Mucosa of descending colon (tissue), 3 donors: ENCODE measurements at regions of chr6 and their contacts with region 1.

Region 1: GRCh38 chr6:149431905-149432775 is 32.1 kb downstream of the SUMO4 start:
- DNase-seq: peak; percentile 87 to 97 (median 91)
- ATAC-seq: peak; percentile 97
- H3K4me3 ChIP-seq: no peak overlapping the region
- H3K4me1 ChIP-seq: no peaks in the 10 kb centered on the region
- CTCF ChIP-seq: peak; percentile 76

Region 2: GRCh38 chr6:149028767-149029405 is 403.3 kb before region 1 on chr6:
- intact Hi-C with region 1: loop called (anchors 2 to 5 kb)
- DNase-seq: peak in 1 of 3 donors; percentile 85
- ATAC-seq: peak; percentile 83
- H3K4me3 ChIP-seq: no peak overlapping the region
- H3K4me1 ChIP-seq: no peaks in the 10 kb centered on the region
- CTCF ChIP-seq: peak; percentile 30

Region 3: GRCh38 chr6:149082286-149082707 is 349.8 kb before region 1 on chr6:
- intact Hi-C with region 1: loop called (anchors 2 to 5 kb)
- DNase-seq: peak; percentile 62 to 96 (median 78)
- ATAC-seq: peak; percentile 90
- H3K4me3 ChIP-seq: no peak overlapping the region
- H3K4me1 ChIP-seq: no peaks in the 10 kb centered on the region
- CTCF ChIP-seq: peak; percentile 55

Region 4: DNA sequence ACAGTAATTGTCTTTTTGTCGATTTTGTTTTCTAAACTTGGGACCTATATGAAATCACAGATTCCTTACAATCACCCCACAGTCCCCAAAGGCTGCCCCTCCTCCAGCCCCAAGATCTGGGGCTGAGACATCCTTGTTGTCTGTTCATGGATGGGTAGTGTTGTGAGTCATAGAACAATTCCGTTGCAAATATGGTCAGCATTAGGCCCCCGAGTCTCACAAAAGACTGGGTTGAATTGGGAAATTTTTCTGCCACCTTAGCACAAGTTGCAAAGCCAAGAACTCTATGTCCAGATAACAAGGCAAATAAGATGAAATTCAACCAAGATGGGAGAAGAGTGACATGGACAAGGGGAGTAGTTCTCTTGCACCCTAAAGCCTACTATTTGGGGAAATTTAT is 125.2 kb before region 1 on chr6:
- intact Hi-C with region 1: no loop called
- DNase-seq: no peak
- ATAC-seq: no peak
- H3K4me3 ChIP-seq: no peak overlapping the region
- H3K4me1 ChIP-seq: no peaks in the 10 kb centered on the region
- CTCF ChIP-seq: no peak